ENCODE measurements at regions of chr3 and their contacts with region 1.

Region 1: GRCh38 chr3:99638167-99638948 is at the start of gene COL8A1:
- DNase-seq: peak; percentile 77
- ATAC-seq: peak; percentile 79
- H3K4me3 ChIP-seq: peak within 1 kb of the TSS; percentile 62
- H3K27ac ChIP-seq: peak within 1 kb of the TSS; percentile 97
- H3K4me1 ChIP-seq: peaks cover 7% of the 10 kb centered on the region; the same call in 1 of the 2 replicates
- H3K27me3 ChIP-seq: no peaks in the 10 kb centered on the region
- CTCF ChIP-seq: no peak
- POLR2A ChIP-seq: peak; percentile 82
- RAD21 ChIP-seq: 0 out of 2 replicates have a peak, but pooled peaks have one; percentile 8
- total RNA-seq, gene COL8A1: 109 and 119 TPM in 2 replicates

Region 2: GRCh38 chr3:99172736-99173657 is 465.4 kb before region 1 on chr3:
- CTCF ChIA-PET with region 1: no interaction called
- POLR2A ChIA-PET with region 1: no interaction called
- dilution Hi-C with region 1: no loop called
- in situ Hi-C with region 1: no loop called
- intact Hi-C with region 1: loop called (anchors 2 kb)
- DNase-seq: peak; percentile 80
- ATAC-seq: peak; percentile 82
- H3K4me3 ChIP-seq: no peak overlapping the region
- H3K27ac ChIP-seq: no peak overlapping the region
- H3K4me1 ChIP-seq: no peaks in the 10 kb centered on the region
- H3K27me3 ChIP-seq: no peaks in the 10 kb centered on the region
- CTCF ChIP-seq: peak; percentile 86
- POLR2A ChIP-seq: no peak
- RAD21 ChIP-seq: peak; percentile 87

Region 3: DNA sequence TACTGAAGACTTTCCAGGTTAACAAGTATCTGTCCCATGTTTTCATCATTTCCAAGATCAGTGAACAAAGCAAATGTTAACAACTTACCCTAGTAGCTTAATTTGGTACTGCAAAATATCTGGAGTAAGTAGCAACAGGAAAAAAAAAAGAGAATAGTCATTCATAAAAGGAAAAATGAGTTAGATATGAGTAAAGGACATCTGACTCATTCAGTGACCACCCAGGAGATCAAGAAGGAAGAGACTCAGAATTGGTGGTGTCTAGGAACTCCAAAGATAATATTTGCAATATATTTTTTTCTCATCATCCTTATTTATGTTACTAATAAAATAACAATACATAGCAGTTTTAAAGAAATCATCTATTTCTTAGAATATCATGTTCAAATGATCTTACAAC is 253.8 kb before region 1 on chr3:
- CTCF ChIA-PET with region 1: no interaction called
- POLR2A ChIA-PET with region 1: interaction called, 14 read pairs
- dilution Hi-C with region 1: no loop called
- in situ Hi-C with region 1: no loop called
- intact Hi-C with region 1: no loop called
- DNase-seq: peak; percentile 39
- ATAC-seq: no peak
- H3K4me3 ChIP-seq: no peak overlapping the region
- H3K27ac ChIP-seq: no peak overlapping the region
- H3K4me1 ChIP-seq: no peaks in the 10 kb centered on the region
- H3K27me3 ChIP-seq: no peaks in the 10 kb centered on the region
- CTCF ChIP-seq: no peak
- POLR2A ChIP-seq: no peak
- RAD21 ChIP-seq: no peak

Region 4: DNA sequence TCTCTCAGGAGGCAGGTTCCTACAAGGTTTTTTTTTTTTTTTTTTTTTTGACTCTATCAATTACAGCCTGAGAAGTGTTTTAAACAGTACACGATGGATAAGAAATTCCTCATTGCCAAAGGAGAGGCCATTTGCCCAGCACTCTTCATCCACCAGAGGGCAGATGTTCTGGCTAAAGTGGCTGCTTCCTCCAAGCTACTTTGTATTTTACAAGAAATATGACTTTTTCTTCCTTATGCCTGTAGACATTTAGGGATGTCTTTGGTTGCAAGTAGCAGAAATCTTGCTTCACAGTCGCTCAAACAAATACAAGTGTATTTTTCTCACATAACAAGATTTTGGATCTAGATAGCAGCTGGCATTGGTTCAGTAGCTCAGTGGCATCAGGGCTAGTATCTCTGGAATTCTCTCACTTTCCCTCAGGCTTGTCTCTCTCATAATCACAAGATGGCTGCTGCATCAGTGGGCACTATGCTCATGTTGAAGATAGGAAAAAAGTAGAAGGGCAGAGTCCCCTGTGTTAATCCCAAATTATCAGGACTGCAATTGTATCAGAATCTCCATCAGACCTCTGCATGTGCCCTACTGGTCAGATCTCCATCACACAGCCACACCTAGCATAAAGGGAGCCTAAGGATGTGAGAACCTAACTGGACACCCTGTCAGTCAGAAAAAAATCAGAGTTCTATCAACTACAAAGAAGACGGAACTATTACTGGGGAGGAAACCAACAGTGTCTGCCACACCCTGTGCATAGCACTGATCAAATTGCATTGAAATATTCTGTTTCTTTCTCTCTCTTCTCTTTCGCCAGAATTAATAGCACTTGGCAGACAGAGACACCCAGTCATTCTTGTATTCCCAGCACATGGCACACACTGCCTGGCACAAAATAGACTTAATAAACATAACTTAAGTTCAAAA is 138.9 kb before region 1 on chr3:
- CTCF ChIA-PET with region 1: interaction called, 4 read pairs
- POLR2A ChIA-PET with region 1: no interaction called
- dilution Hi-C with region 1: no loop called
- in situ Hi-C with region 1: loop called (anchors 5 kb)
- intact Hi-C with region 1: loop called (anchors 2 kb)
- DNase-seq: peak; percentile 73
- ATAC-seq: peak; percentile 65
- H3K4me3 ChIP-seq: no peak overlapping the region
- H3K27ac ChIP-seq: no peak overlapping the region
- H3K4me1 ChIP-seq: peaks cover 7% of the 10 kb centered on the region
- H3K27me3 ChIP-seq: no peaks in the 10 kb centered on the region
- CTCF ChIP-seq: peak; percentile 87
- POLR2A ChIP-seq: no peak
- RAD21 ChIP-seq: peak; percentile 79

Region 5: DNA sequence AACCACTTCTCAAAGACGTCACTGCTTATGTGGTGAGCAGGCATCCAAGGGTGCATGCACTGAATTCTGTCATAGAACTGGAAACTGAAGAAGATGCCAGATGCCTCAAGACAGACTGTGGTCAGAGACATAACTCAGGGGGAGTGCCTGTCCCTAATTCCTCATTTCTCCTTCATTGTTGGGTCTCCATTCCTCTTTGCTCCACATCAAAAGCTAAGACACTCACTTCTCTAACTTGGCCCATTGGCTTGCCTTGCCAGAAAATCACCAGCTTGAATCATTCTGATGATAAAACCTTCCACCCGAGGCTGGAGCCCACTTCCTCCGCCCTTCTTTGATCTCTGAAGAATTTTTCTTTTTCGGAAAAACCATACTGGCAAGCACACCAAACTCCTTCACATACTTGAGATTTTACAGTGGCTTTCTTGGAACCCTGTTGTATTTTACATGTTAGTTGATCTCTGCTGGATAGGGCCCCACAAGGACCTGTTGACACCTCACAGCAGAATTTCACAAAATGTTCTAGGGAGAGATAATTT is 69.9 kb after region 1 on chr3:
- CTCF ChIA-PET with region 1: no interaction called
- POLR2A ChIA-PET with region 1: no interaction called
- dilution Hi-C with region 1: no loop called
- in situ Hi-C with region 1: no loop called
- intact Hi-C with region 1: no loop called
- DNase-seq: peak; percentile 33
- ATAC-seq: no peak; the same call in 1 of the 2 replicates
- H3K4me3 ChIP-seq: no peak overlapping the region
- H3K27ac ChIP-seq: no peak overlapping the region
- H3K4me1 ChIP-seq: peaks cover 4% of the 10 kb centered on the region
- H3K27me3 ChIP-seq: no peaks in the 10 kb centered on the region
- CTCF ChIP-seq: no peak
- POLR2A ChIP-seq: no peak
- RAD21 ChIP-seq: no peak